ENCODE measurements at regions of chr15 and their contacts with region 1.

Region 1: GRCh38 chr15:63048115-63048775 is 5.7 kb downstream of the TPM1 start:
- DNase-seq: peak; percentile 97 to 98
- H3K4me3 ChIP-seq: peak overlapping the region; percentile 69 to 85 (median 80)
- H3K27ac ChIP-seq: peak overlapping the region; percentile 59 to 95 (median 92)
- H3K4me1 ChIP-seq: peaks cover 35 to 62% of the 10 kb centered on the region in 2 donors
- H3K27me3 ChIP-seq: no peaks in the 10 kb centered on the region
- CTCF ChIP-seq: peak; percentile 83 to 99 (median 88)
- POLR2A ChIP-seq: peak; percentile 70 to 94

Region 2: GRCh38 chr15:61997786-61998185 is 1050.5 kb before region 1 on chr15:
- intact Hi-C with region 1: no loop called
- DNase-seq: no peak
- H3K4me3 ChIP-seq: no peak overlapping the region
- H3K27ac ChIP-seq: no peak overlapping the region
- H3K4me1 ChIP-seq: no peaks in the 10 kb centered on the region
- H3K27me3 ChIP-seq: no peaks in the 10 kb centered on the region
- CTCF ChIP-seq: no peak
- POLR2A ChIP-seq: no peak

Region 3: GRCh38 chr15:62782039-62782791 is 266.0 kb before region 1 on chr15:
- intact Hi-C with region 1: loop called (anchors 5 kb)
- DNase-seq: peak; percentile 97
- H3K4me3 ChIP-seq: no peak overlapping the region
- H3K27ac ChIP-seq: peak overlapping the region; percentile 74 to 85 (median 81)
- H3K4me1 ChIP-seq: peaks cover 30 to 35% of the 10 kb centered on the region in 2 donors
- H3K27me3 ChIP-seq: no peaks in the 10 kb centered on the region
- CTCF ChIP-seq: peak; percentile 30 to 97 (median 74)
- POLR2A ChIP-seq: peak in 1 of 2 donors; percentile 29

Region 4: DNA sequence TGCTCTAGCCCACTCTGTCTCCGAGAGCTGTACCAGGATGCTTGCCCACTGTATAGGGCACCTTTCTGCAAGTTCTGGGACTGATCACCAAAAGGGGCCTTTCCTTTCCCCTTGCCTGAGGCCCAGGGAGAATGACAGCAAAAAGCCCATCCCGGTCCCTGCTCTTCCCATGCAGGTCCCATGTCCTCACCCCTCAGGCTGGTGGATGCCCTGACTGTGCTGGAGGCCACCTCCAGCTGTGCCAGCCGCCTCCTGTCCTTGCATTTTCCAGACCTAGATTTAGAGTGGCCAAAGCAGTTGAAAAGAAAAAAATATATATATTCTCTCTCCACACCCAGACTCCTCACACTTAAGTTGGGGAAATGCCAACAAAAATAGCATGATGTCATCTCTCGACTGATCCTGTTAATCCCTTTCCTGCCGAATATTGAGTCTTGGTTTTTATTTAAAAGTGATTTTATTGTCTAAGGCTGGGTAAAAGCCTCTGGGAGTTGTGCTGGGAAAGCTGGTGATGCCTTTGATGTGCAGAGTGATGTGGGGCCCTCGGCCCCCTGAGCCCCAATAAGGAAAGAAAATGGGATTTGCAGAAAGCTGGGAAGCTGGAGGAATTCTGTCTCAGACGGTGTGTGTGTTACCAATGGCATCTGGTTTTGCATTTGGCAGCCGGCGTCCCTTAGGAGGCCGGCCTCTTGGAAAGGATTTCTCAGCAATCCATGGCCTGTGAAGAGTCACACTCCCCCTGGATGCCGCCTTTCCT is 35.0 kb before region 1 on chr15:
- intact Hi-C with region 1: no loop called
- DNase-seq: no peak
- H3K4me3 ChIP-seq: no peak overlapping the region
- H3K27ac ChIP-seq: no peak overlapping the region
- H3K4me1 ChIP-seq: no peaks in the 10 kb centered on the region
- H3K27me3 ChIP-seq: no peaks in the 10 kb centered on the region
- CTCF ChIP-seq: no peak
- POLR2A ChIP-seq: no peak

Region 5: GRCh38 chr15:63264688-63265302 is 216.6 kb after region 1 on chr15:
- intact Hi-C with region 1: no loop called
- DNase-seq: no peak
- H3K4me3 ChIP-seq: no peak overlapping the region
- H3K27ac ChIP-seq: no peak overlapping the region
- H3K4me1 ChIP-seq: no peaks in the 10 kb centered on the region
- H3K27me3 ChIP-seq: no peaks in the 10 kb centered on the region
- CTCF ChIP-seq: no peak
- POLR2A ChIP-seq: no peak

Measured in thyroid gland (tissue), 4 donors.